Dendritic cell treated with granulocyte-macrophage colony-stimulating factor and Interleukin-4, amounts not matched to agents 40 ng/mL and 50 ng/mL, for 4 days (primary cell): ENCODE measurements at regions of chr17 and their contacts with region 1.

Region 1: GRCh38 chr17:59707114-59707970 is at the starts of genes PTRH2 and VMP1:
- H3K4me3 Mint-ChIP-seq: peak within 1 kb of the TSS; percentile 91
- H3K27ac Mint-ChIP-seq: peak within 1 kb of the TSS; percentile 93
- H3K4me1 Mint-ChIP-seq: peaks cover 61% of the 10 kb centered on the region
- H3K27me3 Mint-ChIP-seq: no peaks in the 10 kb centered on the region

Region 2: DNA sequence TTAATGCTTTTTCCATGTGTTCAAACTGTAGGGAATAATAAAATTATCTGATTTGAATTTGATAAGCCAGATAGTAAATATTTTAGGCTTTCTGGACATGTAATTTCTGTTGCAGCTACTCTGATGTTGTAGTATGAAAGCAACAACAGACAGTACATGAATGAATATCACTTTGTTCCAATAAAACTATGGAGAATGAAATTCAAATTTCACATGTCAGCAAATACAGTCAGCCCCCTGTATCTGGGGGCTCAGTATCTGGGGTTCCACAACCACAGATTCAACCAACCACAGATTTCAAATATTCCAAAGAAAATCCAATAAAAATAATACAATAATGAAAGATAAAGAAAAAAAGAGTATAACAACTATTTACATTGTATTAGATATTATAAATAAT is 95.8 kb before region 1 on chr17:
- intact Hi-C with region 1: no loop called
- H3K4me3 Mint-ChIP-seq: no peak overlapping the region
- H3K27ac Mint-ChIP-seq: no peak overlapping the region
- H3K4me1 Mint-ChIP-seq: no peaks in the 10 kb centered on the region
- H3K27me3 Mint-ChIP-seq: no peaks in the 10 kb centered on the region

Region 3: GRCh38 chr17:59746849-59747445 is 39.6 kb after region 1 on chr17:
- intact Hi-C with region 1: loop called (anchors 5 kb)
- H3K4me3 Mint-ChIP-seq: no peak overlapping the region
- H3K27ac Mint-ChIP-seq: peak overlapping the region; percentile 60
- H3K4me1 Mint-ChIP-seq: peaks cover 10% of the 10 kb centered on the region
- H3K27me3 Mint-ChIP-seq: no peaks in the 10 kb centered on the region

Region 4: GRCh38 chr17:59892924-59893676 is 185.8 kb after region 1 on chr17 and contains the starts of genes RPS6KB1 and TUBD1:
- intact Hi-C with region 1: loop called (anchors 1 kb)
- H3K4me3 Mint-ChIP-seq: peak within 1 kb of the TSS; percentile 100
- H3K27ac Mint-ChIP-seq: peak within 1 kb of the TSS; percentile 99
- H3K4me1 Mint-ChIP-seq: peaks cover 40% of the 10 kb centered on the region
- H3K27me3 Mint-ChIP-seq: no peaks in the 10 kb centered on the region